Prostate gland (tissue), 2 donors: ENCODE measurements at regions of chr4 and their contacts with region 1.

Region 1: GRCh38 chr4:30714408-30715027 is 5.7 kb upstream of the PCDH7 start:
- DNase-seq: no peak
- H3K4me3 ChIP-seq: no peak overlapping the region
- H3K27ac ChIP-seq: no peak overlapping the region
- H3K4me1 ChIP-seq: no peaks in the 10 kb centered on the region
- H3K27me3 ChIP-seq: no peaks in the 10 kb centered on the region
- CTCF ChIP-seq: peak in 3 of 4 experiments; percentile 44 to 67 (median 65)
- POLR2A ChIP-seq: no peak

Region 2: GRCh38 chr4:31360786-31361185 is 646.3 kb after region 1 on chr4:
- intact Hi-C with region 1: loop called (anchors 10 kb)
- DNase-seq: no peak
- H3K4me3 ChIP-seq: no peak overlapping the region
- H3K27ac ChIP-seq: no peak overlapping the region
- H3K4me1 ChIP-seq: no peaks in the 10 kb centered on the region
- H3K27me3 ChIP-seq: no peaks in the 10 kb centered on the region
- CTCF ChIP-seq: no peak
- POLR2A ChIP-seq: no peak

Region 3: DNA sequence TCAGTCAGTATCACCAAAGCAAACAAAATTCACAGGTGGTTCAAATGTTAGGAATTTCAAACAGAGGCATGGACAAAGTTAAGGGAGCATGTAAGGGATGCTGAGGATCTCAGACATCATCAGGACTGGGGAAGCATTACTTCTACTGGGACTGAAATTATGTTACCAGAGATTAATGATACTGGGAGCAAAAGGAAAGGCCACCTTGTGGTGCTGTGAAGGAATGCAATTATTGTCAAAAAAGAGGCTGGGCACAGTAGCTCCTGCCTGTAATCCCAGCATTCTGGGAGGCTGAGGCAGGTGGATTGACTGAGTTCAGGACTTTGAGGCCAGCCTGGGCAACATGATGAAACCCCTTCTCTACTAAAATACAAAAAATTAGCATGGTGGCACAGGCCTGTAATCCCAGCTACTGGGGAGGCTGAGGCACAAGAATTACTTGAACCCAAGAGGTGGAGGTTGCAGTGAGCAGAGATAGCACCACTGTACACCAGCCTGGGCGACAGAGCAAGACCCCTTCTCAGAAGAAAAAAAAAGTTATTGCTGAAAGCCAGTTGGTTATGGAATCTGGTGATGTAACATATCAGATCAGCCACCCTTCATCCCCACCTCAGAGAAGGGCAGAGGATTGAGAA is 959.9 kb after region 1 on chr4:
- intact Hi-C with region 1: loop called (anchors 10 kb)
- DNase-seq: no peak
- H3K4me3 ChIP-seq: no peak overlapping the region
- H3K27ac ChIP-seq: no peak overlapping the region
- H3K4me1 ChIP-seq: no peaks in the 10 kb centered on the region
- H3K27me3 ChIP-seq: no peaks in the 10 kb centered on the region
- CTCF ChIP-seq: peak; percentile 15 to 44 (median 38)
- POLR2A ChIP-seq: no peak